ENCODE measurements at regions of chr21 and their contacts with region 1.

Region 1: DNA sequence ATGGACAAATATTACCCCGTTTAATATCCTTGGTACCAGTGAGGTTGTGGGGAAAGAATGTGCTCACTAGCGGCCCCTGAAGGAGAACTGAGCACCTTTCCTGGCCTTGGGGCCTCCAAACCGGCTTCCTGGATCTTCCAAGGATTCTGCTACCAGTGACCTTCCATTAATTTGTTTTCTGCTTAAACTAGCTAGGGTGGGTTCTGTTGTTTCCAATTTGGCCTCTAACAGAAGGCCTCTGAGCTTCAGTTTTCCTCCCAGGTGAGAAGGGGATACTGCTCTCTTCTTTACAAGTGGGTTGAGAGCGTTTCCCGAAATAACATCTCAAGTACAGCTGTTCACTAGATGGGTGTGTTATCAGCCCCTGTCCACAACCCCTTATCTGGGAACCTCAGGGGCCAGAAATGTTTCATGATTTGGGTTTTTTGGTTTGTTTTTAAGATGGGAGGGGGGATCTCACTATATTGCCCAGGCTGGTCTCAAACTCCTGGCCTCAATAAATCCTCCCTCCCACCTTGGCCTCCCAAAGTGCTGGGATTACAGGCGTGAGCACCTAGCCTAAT is 16.9 kb upstream of the IFNGR2 start:
- DNase-seq: no peak
- ATAC-seq: no peak
- H3K4me3 Mint-ChIP-seq: no peak overlapping the region
- H3K27ac Mint-ChIP-seq: no peak overlapping the region
- H3K4me1 Mint-ChIP-seq: peaks cover 37% of the 10 kb centered on the region
- H3K27me3 Mint-ChIP-seq: peaks cover 32% of the 10 kb centered on the region

Region 2: GRCh38 chr21:33402001-33402979 is 16.0 kb after region 1 on chr21:
- POLR2A ChIA-PET with region 1: interaction called, 13 read pairs
- DNase-seq: no peak
- ATAC-seq: no peak
- H3K4me3 Mint-ChIP-seq: peak overlapping the region; percentile 72
- H3K27ac Mint-ChIP-seq: peak overlapping the region; percentile 81
- H3K4me1 Mint-ChIP-seq: peaks cover 42% of the 10 kb centered on the region
- H3K27me3 Mint-ChIP-seq: peaks cover 10% of the 10 kb centered on the region

Region 3: GRCh38 chr21:33434770-33435360 is 48.6 kb after region 1 on chr21:
- POLR2A ChIA-PET with region 1: interaction called, 12 read pairs
- DNase-seq: no peak
- ATAC-seq: peak; percentile 98
- H3K4me3 Mint-ChIP-seq: peak overlapping the region; percentile 32
- H3K27ac Mint-ChIP-seq: peak overlapping the region; percentile 75
- H3K4me1 Mint-ChIP-seq: peaks cover 24% of the 10 kb centered on the region
- H3K27me3 Mint-ChIP-seq: no peaks in the 10 kb centered on the region

Region 4: DNA sequence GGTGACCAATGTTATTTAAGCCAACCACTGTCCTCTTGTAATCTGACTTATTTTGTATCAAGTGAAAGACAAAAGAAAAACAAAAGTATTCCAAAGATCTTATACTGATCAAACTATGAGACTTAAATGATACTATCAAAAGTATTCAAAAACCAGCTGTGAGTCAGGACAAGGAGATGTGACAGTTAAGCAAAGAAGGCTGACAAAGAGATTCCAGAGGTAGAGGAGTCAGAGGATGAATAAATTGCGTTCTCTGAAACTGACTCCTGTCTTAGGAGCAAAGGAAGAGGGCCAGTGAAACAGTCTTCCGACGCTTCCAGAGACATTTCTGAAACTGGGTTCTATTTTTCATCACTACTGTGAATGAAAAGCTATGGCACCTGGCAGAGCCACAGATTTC is 72.6 kb after region 1 on chr21:
- POLR2A ChIA-PET with region 1: no interaction called
- DNase-seq: no peak
- ATAC-seq: no peak
- H3K4me3 Mint-ChIP-seq: no peak overlapping the region
- H3K27ac Mint-ChIP-seq: no peak overlapping the region
- H3K4me1 Mint-ChIP-seq: no peaks in the 10 kb centered on the region
- H3K27me3 Mint-ChIP-seq: no peaks in the 10 kb centered on the region